ENCODE measurements at regions of chr17 and their contacts with region 1.

Region 1: GRCh38 chr17:1516388-1517161 is at the start of gene INPP5K:
- DNase-seq: peak; percentile 88 to 99 (median 98)
- ATAC-seq: peak; percentile 89 to 93
- H3K4me3 Mint-ChIP-seq: peak within 1 kb of the TSS; percentile 81 to 94 (median 91)
- H3K27ac Mint-ChIP-seq: peak within 1 kb of the TSS; percentile 82 to 95 (median 93)
- H3K4me1 Mint-ChIP-seq: peaks cover 12 to 36% (median 21%) of the 10 kb centered on the region in 4 donors
- H3K27me3 Mint-ChIP-seq: no peaks in the 10 kb centered on the region
- polyA plus RNA-seq, gene INPP5K: 62.0 to 75.4 (median 70.5) TPM

Region 2: DNA sequence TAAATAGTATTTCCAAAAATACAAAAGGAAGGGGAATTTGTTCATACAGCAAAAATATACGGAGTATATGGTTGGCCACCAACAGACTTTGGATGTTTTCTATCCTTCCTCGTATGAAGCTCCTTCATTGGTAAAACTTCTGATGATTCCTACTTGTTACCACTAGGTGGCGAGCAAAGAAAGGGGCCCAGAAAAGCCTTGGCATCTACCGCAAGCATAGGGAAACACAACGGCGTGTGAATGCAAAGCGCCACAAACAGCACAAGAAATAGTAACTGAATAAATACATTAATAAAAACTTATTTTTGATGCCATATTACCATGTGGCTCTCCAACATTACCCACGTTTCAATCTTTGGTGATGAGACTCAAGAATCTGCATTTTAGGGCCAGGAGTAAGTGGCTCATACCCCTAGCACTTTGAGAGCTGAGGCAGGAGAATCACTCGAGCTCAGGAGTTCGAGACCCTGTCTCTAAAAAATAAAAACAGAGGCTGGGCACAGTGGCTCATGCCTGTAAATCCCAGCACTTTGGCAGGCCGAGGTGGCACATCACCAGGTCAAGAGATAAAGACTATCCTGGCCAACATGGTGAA is 151.0 kb before region 1 on chr17:
- POLR2A ChIA-PET with region 1: interaction called, 36 read pairs
- DNase-seq: peak; percentile 21 to 79 (median 64)
- ATAC-seq: peak; percentile 61 to 69
- H3K4me3 Mint-ChIP-seq: peak overlapping the region in 6 of 10 donors; percentile 2 to 55 (median 18)
- H3K27ac Mint-ChIP-seq: peak overlapping the region in 8 of 10 donors; percentile 30 to 88 (median 66)
- H3K4me1 Mint-ChIP-seq: peaks cover 27 to 81% (median 64%) of the 10 kb centered on the region in 4 donors
- H3K27me3 Mint-ChIP-seq: no peaks in the 10 kb centered on the region

Region 3: DNA sequence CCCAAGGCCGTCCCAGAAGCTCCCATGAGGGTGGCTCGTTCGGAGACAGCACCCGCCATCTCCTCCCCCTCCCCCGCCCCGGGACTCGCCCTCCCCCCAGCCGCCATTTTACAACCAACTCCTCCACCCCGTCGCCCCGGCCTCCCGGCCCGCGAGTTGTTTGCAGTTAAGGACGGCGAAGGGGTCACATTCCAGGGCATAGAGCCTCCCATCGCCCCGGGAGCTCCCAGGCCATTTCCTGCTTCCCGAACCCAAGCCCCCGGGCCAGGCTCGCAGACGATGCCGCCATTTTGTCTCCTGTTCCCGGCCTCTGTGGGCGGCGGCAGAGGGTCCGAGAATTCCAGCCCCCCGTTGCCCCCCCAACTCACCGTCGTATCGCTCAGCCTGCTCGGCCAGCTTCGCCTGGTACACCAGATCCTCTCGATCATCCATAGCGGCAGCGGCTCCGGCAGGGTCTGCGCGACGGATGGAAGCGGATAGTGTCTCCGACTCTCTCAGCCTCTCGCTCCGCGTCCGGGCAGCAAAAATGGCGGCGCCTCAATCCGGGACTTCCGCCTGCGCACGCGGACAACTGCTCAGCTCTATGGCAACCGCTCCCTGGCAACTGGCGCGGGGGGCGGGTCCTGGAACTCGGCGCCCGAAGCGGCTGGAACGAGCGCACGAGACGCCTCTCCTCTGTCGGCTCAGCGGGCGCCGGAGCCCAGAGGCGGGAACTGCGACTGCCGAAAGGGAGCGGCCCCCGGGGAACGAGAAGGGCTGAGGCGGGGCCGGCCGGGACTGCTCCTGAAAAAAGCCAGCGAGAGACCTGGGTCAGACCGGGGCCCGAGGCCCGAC is 116.7 kb before region 1 on chr17 and contains the start of gene YWHAE:
- POLR2A ChIA-PET with region 1: interaction called, 29 read pairs
- DNase-seq: peak; percentile 93 to 96 (median 94)
- ATAC-seq: peak; percentile 87 to 89
- H3K4me3 Mint-ChIP-seq: peak within 1 kb of the TSS; percentile 98 to 100 (median 99)
- H3K27ac Mint-ChIP-seq: peak within 1 kb of the TSS; percentile 95 to 100 (median 99)
- H3K4me1 Mint-ChIP-seq: peaks cover 22 to 44% (median 41%) of the 10 kb centered on the region in 4 donors
- H3K27me3 Mint-ChIP-seq: no peaks in the 10 kb centered on the region
- polyA plus RNA-seq, gene YWHAE: 28.3 to 34.2 (median 34.0) TPM

Region 4: GRCh38 chr17:1438593-1439083 is 77.9 kb before region 1 on chr17:
- POLR2A ChIA-PET with region 1: no interaction called
- DNase-seq: no peak
- ATAC-seq: no peak
- H3K4me3 Mint-ChIP-seq: no peak overlapping the region
- H3K27ac Mint-ChIP-seq: peak overlapping the region in 4 of 10 donors; percentile 12 to 72 (median 41)
- H3K4me1 Mint-ChIP-seq: peaks cover 3 to 36% (median 22%) of the 10 kb centered on the region in 4 donors
- H3K27me3 Mint-ChIP-seq: no peaks in the 10 kb centered on the region

Region 5: GRCh38 chr17:1455797-1456599 is 60.6 kb before region 1 on chr17 and contains the start of gene CRK:
- POLR2A ChIA-PET with region 1: interaction called, 32 read pairs
- DNase-seq: peak; percentile 96 to 100 (median 98)
- ATAC-seq: peak; percentile 90 to 92
- H3K4me3 Mint-ChIP-seq: peak within 1 kb of the TSS; percentile 83 to 95 (median 89)
- H3K27ac Mint-ChIP-seq: peak within 1 kb of the TSS; percentile 83 to 95 (median 92)
- H3K4me1 Mint-ChIP-seq: peaks cover 16 to 55% (median 46%) of the 10 kb centered on the region in 4 donors
- H3K27me3 Mint-ChIP-seq: peaks cover 2 to 8% (median 6%) of the 10 kb centered on the region in 5 donors
- polyA plus RNA-seq, gene CRK: 18.8 to 24.8 (median 19.9) TPM

Region 6: DNA sequence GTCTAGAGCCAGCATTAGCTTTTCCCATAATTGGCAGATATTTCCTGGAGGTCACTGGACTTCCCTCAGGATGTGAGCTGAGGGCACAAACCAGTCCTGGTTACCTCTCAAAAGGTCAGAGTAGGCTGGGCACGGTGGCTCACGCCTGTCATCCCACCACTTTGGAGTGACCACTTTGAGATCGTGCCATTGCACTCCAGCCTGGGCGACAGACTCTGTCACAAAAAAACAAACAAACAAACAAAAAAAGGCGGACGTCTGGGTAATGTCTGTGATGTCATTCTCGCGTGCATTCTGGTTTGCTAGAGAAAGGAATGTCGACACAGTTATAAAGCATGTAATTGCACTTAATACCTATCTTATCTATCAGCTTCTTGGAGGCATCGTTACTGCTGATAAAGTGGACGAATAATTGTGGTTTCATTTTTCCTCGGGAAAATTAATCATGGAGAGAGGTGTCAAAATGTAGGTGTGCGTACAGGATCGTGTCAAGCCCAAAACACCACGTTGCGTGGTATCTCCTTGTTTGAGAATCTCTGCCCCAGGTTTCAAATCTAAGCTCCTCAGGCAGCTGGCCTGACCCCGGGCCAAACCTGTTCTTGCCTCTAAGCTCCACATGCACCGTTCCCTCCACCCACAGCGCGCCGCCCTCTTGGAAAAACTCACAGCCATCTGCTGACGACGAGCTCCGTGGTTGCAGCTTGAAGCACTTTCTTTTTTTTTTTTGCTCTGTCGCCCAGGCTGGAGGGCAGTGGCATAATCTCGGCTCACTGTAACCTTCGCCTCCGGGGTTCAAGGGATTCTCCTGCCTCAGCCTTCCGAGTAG is 54.1 kb before region 1 on chr17:
- POLR2A ChIA-PET with region 1: interaction called, 32 read pairs
- DNase-seq: no peak
- ATAC-seq: no peak
- H3K4me3 Mint-ChIP-seq: peak overlapping the region; percentile 59 to 87 (median 72)
- H3K27ac Mint-ChIP-seq: peak overlapping the region; percentile 12 to 90 (median 78)
- H3K4me1 Mint-ChIP-seq: peaks cover 19 to 39% (median 37%) of the 10 kb centered on the region in 4 donors
- H3K27me3 Mint-ChIP-seq: peaks cover 2 to 8% (median 4%) of the 10 kb centered on the region in 5 donors

Region 7: GRCh38 chr17:1488030-1488863 is 28.3 kb before region 1 on chr17:
- POLR2A ChIA-PET with region 1: interaction called, 38 read pairs
- DNase-seq: peak; percentile 52 to 79 (median 70)
- ATAC-seq: peak; percentile 18 to 37
- H3K4me3 Mint-ChIP-seq: peak overlapping the region; percentile 75 to 90 (median 86)
- H3K27ac Mint-ChIP-seq: peak overlapping the region in 9 of 10 donors; percentile 47 to 91 (median 77)
- H3K4me1 Mint-ChIP-seq: peaks cover 16 to 51% (median 44%) of the 10 kb centered on the region in 4 donors
- H3K27me3 Mint-ChIP-seq: no peaks in the 10 kb centered on the region

Region 8: GRCh38 chr17:1628856-1629646 is 112.5 kb after region 1 on chr17:
- POLR2A ChIA-PET with region 1: interaction called, 26 read pairs
- DNase-seq: peak; percentile 84 to 97 (median 87)
- ATAC-seq: peak; percentile 77 to 84
- H3K4me3 Mint-ChIP-seq: peak overlapping the region; percentile 92 to 99 (median 95)
- H3K27ac Mint-ChIP-seq: peak overlapping the region; percentile 82 to 99 (median 92)
- H3K4me1 Mint-ChIP-seq: peaks cover 15 to 46% (median 25%) of the 10 kb centered on the region in 4 donors
- H3K27me3 Mint-ChIP-seq: no peaks in the 10 kb centered on the region